ENCODE measurements at regions of chr12 and their contacts with region 1.

Region 1: DNA sequence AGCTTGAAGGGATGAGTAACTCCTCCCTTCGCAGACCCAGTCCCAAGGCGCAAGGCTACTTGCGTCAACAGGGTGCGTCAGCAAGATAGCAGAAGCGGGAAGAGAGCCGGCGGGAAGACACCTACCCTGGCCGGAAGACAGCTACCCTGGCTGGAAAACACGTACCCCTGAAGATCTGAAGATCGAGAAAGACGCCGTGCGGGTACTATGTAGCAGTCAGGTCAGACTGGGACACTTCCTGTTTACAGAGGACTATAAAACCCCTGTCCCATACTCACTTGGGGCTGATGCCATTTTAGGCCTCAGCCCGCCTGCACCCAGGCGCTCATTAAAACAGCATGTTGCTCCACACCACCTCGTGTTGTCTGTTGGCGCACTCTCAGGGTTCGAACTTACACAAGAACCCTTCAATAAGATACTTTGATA is 80.9 kb downstream of the ABCD2 start:
- DNase-seq: no peak
- H3K4me3 Mint-ChIP-seq: no peak overlapping the region
- H3K27ac Mint-ChIP-seq: no peak overlapping the region
- H3K4me1 Mint-ChIP-seq: peaks cover 10% of the 10 kb centered on the region
- H3K27me3 Mint-ChIP-seq: no peaks in the 10 kb centered on the region
- CTCF ChIP-seq: no peak

Region 2: DNA sequence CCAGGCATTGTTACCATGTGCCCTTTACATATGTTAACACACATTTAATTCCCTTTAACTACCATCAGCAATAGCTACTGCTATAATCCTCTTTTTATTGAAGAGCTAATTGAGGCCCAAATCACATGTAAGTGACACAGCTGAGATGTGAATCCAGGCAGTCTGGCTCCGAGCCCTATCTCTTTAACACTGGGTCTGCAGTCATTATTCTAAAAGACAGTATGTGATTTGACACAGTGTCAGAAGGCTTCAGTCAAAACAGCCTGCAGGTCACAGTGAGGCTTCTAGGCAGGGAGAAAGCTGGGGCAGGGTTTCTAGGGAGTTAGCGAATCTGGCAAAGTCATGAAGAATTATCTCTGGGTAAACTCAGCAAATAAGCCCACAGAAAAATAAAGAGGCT is 244.0 kb before region 1 on chr12:
- CTCF ChIA-PET with region 1: no interaction called
- POLR2A ChIA-PET with region 1: no interaction called
- intact Hi-C with region 1: no loop called
- DNase-seq: no peak
- H3K4me3 Mint-ChIP-seq: no peak overlapping the region
- H3K27ac Mint-ChIP-seq: no peak overlapping the region
- H3K4me1 Mint-ChIP-seq: peaks cover 8% of the 10 kb centered on the region
- H3K27me3 Mint-ChIP-seq: no peaks in the 10 kb centered on the region
- CTCF ChIP-seq: no peak

Region 3: GRCh38 chr12:39553471-39553870 is 14.8 kb after region 1 on chr12:
- CTCF ChIA-PET with region 1: no interaction called
- POLR2A ChIA-PET with region 1: no interaction called
- intact Hi-C with region 1: no loop called
- DNase-seq: no peak
- H3K4me3 Mint-ChIP-seq: no peak overlapping the region
- H3K27ac Mint-ChIP-seq: no peak overlapping the region
- H3K4me1 Mint-ChIP-seq: no peaks in the 10 kb centered on the region
- H3K27me3 Mint-ChIP-seq: no peaks in the 10 kb centered on the region
- CTCF ChIP-seq: no peak

Region 4: DNA sequence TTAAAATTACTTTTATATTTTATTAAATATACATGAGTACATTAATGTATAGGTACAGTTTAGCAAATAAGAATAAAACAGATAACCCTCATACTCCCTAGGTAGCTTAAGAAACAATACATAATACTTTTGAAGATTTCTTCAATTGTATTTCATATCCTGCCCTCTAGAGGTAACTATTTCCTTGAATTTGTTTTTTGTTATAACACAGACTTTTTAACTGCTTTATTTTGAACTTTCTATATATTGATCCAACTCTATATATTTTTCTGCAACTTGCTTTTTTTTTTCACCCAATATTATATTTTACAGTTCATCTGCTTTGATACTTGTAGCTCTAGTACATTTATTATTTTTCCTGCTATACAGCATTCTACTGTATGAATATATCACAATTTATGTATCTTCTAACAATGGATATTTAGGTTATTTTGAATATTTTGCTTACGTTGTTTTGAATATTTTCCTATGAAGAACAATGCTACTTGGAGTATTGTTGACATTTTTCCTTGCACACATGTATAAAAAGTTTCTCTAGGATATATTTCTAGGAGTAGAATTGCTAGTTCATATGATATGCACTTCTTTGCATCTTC is 153.7 kb after region 1 on chr12:
- CTCF ChIA-PET with region 1: no interaction called
- POLR2A ChIA-PET with region 1: no interaction called
- intact Hi-C with region 1: loop called (anchors 5 kb)
- DNase-seq: peak; percentile 3
- H3K4me3 Mint-ChIP-seq: no peak overlapping the region
- H3K27ac Mint-ChIP-seq: no peak overlapping the region
- H3K4me1 Mint-ChIP-seq: no peaks in the 10 kb centered on the region
- H3K27me3 Mint-ChIP-seq: no peaks in the 10 kb centered on the region
- CTCF ChIP-seq: no peak

Region 5: GRCh38 chr12:39723831-39724230 is 185.1 kb after region 1 on chr12:
- CTCF ChIA-PET with region 1: no interaction called
- POLR2A ChIA-PET with region 1: no interaction called
- intact Hi-C with region 1: no loop called
- DNase-seq: peak; percentile 86
- H3K4me3 Mint-ChIP-seq: no peak overlapping the region
- H3K27ac Mint-ChIP-seq: peak overlapping the region; percentile 19
- H3K4me1 Mint-ChIP-seq: peaks cover 4% of the 10 kb centered on the region
- H3K27me3 Mint-ChIP-seq: no peaks in the 10 kb centered on the region
- CTCF ChIP-seq: no peak

Measured in MCF 10A (cell line).